ENCODE measurements at regions of chr3 and their contacts with region 1.

Region 1: GRCh38 chr3:112990672-112991602 is at the start of gene GTPBP8:
- DNase-seq: peak; percentile 86
- ATAC-seq: peak; percentile 97
- H3K4me3 ChIP-seq: peak within 1 kb of the TSS; percentile 75 to 97 (median 91)
- H3K27ac ChIP-seq: peak within 1 kb of the TSS; percentile 99
- H3K4me1 ChIP-seq: peaks cover 31% of the 10 kb centered on the region
- H3K27me3 ChIP-seq: no peaks in the 10 kb centered on the region; a peak in 1 of 5 replicates
- CTCF ChIP-seq: peak; percentile 19
- EP300 ChIP-seq: no peak; a peak in 1 of 4 replicates
- POLR2A ChIP-seq: peak; percentile 88 to 98
- RAD21 ChIP-seq: no peak
- total RNA-seq, gene GTPBP8: 16.7 and 26.7 TPM in 2 replicates

Region 2: GRCh38 chr3:112561731-112562688 is 428.9 kb before region 1 on chr3 and contains the starts of genes ATG3 and SLC35A5:
- CTCF ChIA-PET with region 1: no interaction called
- POLR2A ChIA-PET with region 1: no interaction called
- in situ Hi-C with region 1: no loop called
- intact Hi-C with region 1: loop called (anchors 2 kb)
- DNase-seq: peak; percentile 96
- ATAC-seq: peak; percentile 94
- H3K4me3 ChIP-seq: peak within 1 kb of the TSS; percentile 85 to 91 (median 85)
- H3K27ac ChIP-seq: peak within 1 kb of the TSS; percentile 95
- H3K4me1 ChIP-seq: peaks cover 16% of the 10 kb centered on the region
- H3K27me3 ChIP-seq: no peaks in the 10 kb centered on the region; a peak in 1 of 5 replicates
- CTCF ChIP-seq: peak; percentile 25
- EP300 ChIP-seq: peak in 1 of 2 experiments; percentile 26; a peak in 1 of 4 replicates
- POLR2A ChIP-seq: peak; percentile 81 to 92
- RAD21 ChIP-seq: no peak; the same call in 1 of the 2 replicates
- total RNA-seq, gene ATG3: 34.8 and 43.3 TPM in 2 replicates
- total RNA-seq, gene SLC35A5: 26.5 and 36.4 TPM in 2 replicates

Region 3: GRCh38 chr3:113019182-113020137 is 28.5 kb after region 1 on chr3:
- CTCF ChIA-PET with region 1: no interaction called
- POLR2A ChIA-PET with region 1: interaction called, 61 read pairs
- in situ Hi-C with region 1: no loop called
- intact Hi-C with region 1: loop called (anchors 2 kb)
- DNase-seq: peak; percentile 81
- ATAC-seq: peak; percentile 98
- H3K4me3 ChIP-seq: peak overlapping the region; percentile 84 to 97 (median 96)
- H3K27ac ChIP-seq: peak overlapping the region; percentile 92
- H3K4me1 ChIP-seq: peaks cover 24% of the 10 kb centered on the region
- H3K27me3 ChIP-seq: no peaks in the 10 kb centered on the region; a peak in 1 of 5 replicates
- CTCF ChIP-seq: peak; percentile 9; the same call in 1 of the 2 replicates
- EP300 ChIP-seq: no peak
- POLR2A ChIP-seq: peak; percentile 60 to 80
- RAD21 ChIP-seq: no peak

Measured in HepG2 (cell line).